ENCODE measurements at regions of chr3 and their contacts with region 1.

Region 1: GRCh38 chr3:143895805-143896204 is 47.5 kb upstream of the SLC9A9 start:
- DNase-seq: peak; percentile 49
- ATAC-seq: peak; percentile 31
- H3K4me3 ChIP-seq: no peak overlapping the region
- H3K4me3 Mint-ChIP-seq: no peak overlapping the region
- H3K27ac ChIP-seq: no peak overlapping the region
- H3K27ac Mint-ChIP-seq: no peak overlapping the region
- H3K4me1 ChIP-seq: no peaks in the 10 kb centered on the region
- H3K4me1 Mint-ChIP-seq: no peaks in the 10 kb centered on the region
- H3K27me3 ChIP-seq: peaks cover 0 to 2% (median 0%) of the 10 kb centered on the region in 4 experiments
- H3K27me3 Mint-ChIP-seq: peaks cover 8% of the 10 kb centered on the region
- CTCF ChIP-seq: peak; percentile 77

Region 2: GRCh38 chr3:143935678-143936077 is 39.9 kb after region 1 on chr3:
- CTCF ChIA-PET with region 1: interaction called, 14 read pairs
- POLR2A ChIA-PET with region 1: no interaction called
- intact Hi-C with region 1: no loop called
- DNase-seq: no peak
- ATAC-seq: no peak
- H3K4me3 ChIP-seq: no peak overlapping the region
- H3K4me3 Mint-ChIP-seq: no peak overlapping the region
- H3K27ac ChIP-seq: no peak overlapping the region
- H3K27ac Mint-ChIP-seq: no peak overlapping the region
- H3K4me1 ChIP-seq: no peaks in the 10 kb centered on the region
- H3K4me1 Mint-ChIP-seq: no peaks in the 10 kb centered on the region
- H3K27me3 ChIP-seq: peaks cover 0 to 3% (median 0%) of the 10 kb centered on the region in 4 experiments
- H3K27me3 Mint-ChIP-seq: peaks cover 20% of the 10 kb centered on the region
- CTCF ChIP-seq: no peak

Region 3: GRCh38 chr3:143956838-143957237 is 61.0 kb after region 1 on chr3:
- CTCF ChIA-PET with region 1: interaction called, 178 read pairs
- POLR2A ChIA-PET with region 1: no interaction called
- intact Hi-C with region 1: no loop called
- DNase-seq: no peak
- ATAC-seq: no peak
- H3K4me3 ChIP-seq: no peak overlapping the region
- H3K4me3 Mint-ChIP-seq: no peak overlapping the region
- H3K27ac ChIP-seq: no peak overlapping the region
- H3K27ac Mint-ChIP-seq: no peak overlapping the region
- H3K4me1 ChIP-seq: no peaks in the 10 kb centered on the region
- H3K4me1 Mint-ChIP-seq: peaks cover 3% of the 10 kb centered on the region
- H3K27me3 ChIP-seq: no peaks in the 10 kb centered on the region
- H3K27me3 Mint-ChIP-seq: peaks cover 8% of the 10 kb centered on the region
- CTCF ChIP-seq: no peak

Measured in B cell (primary cell).